ENCODE measurements at regions of chr5 and their contacts with region 1.

Region 1: DNA sequence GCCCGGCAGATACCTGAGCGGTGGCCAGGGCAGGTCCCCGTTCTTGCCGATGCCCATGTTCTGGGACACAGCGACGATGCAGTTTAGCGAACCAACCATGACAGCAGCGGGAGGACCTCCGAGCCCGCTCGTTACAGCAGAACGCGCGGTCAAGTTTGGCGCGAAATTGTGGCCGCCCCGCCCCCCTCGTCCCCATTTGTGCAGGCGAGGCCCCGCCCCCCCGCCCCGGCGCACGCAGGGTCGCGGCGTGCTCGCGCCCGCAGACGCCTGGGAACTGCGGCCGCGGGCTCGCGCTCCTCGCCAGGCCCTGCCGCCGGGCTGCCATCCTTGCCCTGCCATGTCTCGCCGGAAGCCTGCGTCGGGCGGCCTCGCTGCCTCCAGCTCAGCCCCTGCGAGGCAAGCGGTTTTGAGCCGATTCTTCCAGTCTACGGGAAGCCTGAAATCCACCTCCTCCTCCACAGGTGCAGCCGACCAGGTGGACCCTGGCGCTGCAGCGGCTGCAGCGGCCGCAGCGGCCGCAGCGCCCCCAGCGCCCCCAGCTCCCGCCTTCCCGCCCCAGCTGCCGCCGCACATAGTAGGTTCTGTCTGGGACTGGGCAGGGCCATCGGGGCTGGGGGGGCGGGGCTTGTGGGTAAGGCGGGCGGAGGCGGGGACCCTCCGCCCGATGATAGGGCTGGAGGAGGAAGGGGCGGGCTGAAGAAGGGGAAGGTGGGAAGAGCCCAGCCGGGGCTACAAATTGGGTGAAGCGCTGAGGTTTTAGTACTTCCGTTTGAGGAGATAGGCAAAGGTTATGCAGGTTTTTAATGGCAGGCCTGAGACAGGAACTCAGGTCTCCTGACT is at the starts of genes DHFR and MSH3:
- H3K4me3 ChIP-seq: peak within 1 kb of the TSS; percentile 98
- H3K27ac ChIP-seq: peak within 1 kb of the TSS; percentile 97
- H3K4me1 ChIP-seq: peaks cover 6% of the 10 kb centered on the region; the same call in 1 of the 2 replicates
- CTCF ChIP-seq: peak; percentile 85

Region 2: DNA sequence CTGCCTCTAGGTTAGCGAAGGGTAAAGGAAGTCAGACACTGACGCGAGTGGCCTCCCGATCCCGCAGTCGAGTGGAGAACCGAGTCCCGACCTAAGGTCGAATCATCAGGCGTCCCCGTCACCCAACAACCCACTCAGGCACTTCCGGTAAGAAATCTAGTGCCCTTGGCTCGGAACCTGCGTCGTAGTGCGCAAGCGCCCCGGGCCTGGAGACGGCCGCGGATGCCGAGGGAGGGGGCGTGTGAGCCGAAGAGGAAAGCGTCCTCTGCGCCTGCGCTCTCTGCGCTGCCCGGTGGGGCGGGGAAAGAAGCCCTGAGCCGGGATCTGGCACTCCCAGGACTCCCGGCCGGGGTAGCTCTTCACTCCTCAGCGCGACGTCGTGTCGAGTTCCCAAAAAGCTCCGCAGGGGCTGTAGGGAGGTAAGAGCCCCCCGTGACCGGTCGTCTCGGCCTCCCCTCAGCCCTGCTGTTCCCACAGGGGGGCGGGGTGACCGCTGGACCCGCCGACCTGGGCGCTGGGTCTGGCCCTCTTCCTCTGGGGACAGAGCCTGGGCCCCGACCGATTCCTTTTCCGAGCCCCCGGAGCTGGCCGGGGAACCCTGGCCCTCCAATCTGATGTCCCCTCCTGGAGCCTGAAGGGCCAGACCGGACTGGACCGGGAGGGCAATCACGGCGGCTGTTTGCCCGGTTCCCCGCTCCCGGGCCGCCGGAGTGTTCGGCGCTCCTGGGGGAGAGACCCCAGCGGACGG is 246.7 kb before region 1 on chr5 and contains the start of gene ZFYVE16:
- CTCF ChIA-PET with region 1: no interaction called
- POLR2A ChIA-PET with region 1: interaction called, 14 read pairs
- H3K4me3 ChIP-seq: peak within 1 kb of the TSS; percentile 97
- H3K27ac ChIP-seq: peak within 1 kb of the TSS; percentile 95
- H3K4me1 ChIP-seq: peaks cover 4% of the 10 kb centered on the region; the same call in 1 of the 2 replicates
- CTCF ChIP-seq: peak; percentile 82

Region 3: DNA sequence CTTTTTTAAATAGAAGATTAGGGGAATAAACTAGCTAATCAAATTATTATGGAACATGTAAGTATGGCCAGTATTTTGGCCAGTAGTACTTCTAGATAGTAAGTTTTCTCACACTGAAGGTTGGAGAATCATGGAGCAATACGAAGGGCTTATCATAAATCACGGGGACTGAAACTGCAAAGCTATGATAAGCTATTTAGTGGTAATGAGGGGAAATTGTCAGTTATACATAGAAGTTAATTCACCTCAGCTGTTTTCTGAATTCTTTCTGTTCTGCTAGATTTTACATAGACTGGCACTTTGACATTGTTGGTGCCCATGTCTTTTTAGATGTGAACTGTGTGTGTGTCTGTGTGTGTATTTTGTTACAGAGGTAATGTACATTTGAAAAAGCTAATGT is 201.2 kb before region 1 on chr5:
- CTCF ChIA-PET with region 1: no interaction called
- POLR2A ChIA-PET with region 1: no interaction called
- H3K4me3 ChIP-seq: no peak overlapping the region
- H3K27ac ChIP-seq: no peak overlapping the region
- H3K4me1 ChIP-seq: no peaks in the 10 kb centered on the region
- CTCF ChIP-seq: no peak

Region 4: DNA sequence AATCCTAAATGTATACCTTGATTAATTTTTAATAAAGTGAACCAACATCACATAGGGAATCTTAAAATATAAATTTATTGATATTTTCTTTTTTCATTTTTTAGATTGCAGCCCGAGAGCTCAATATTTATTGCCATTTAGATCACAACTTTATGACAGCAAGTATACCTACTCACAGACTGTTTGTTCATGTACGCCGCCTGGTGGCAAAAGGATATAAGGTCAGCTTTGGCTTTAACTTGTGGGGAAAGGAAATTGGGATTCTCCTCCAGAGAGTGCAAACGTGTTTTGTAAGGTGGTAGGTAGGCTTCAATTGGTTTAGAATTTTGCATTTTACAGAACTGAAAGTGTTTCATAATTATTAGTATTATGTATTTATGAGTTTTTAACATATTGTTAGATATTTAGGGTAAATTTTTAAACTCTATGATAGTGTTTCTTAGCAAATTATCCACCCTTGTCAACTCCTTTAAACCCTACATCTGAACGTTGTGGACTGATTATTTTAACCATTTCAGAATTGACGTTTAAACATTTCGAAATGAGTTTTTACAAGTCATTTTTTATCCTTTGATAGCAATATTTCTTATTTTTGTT is 17.6 kb after region 1 on chr5:
- CTCF ChIA-PET with region 1: interaction called, 22 read pairs
- POLR2A ChIA-PET with region 1: interaction called, 4 read pairs
- H3K4me3 ChIP-seq: no peak overlapping the region
- H3K27ac ChIP-seq: no peak overlapping the region
- H3K4me1 ChIP-seq: no peaks in the 10 kb centered on the region
- CTCF ChIP-seq: peak; percentile 40; the same call in 1 of the 2 replicates